PC-9 (cell line): ENCODE measurements at regions of chr4 and their contacts with region 1.

Region 1: GRCh38 chr4:109815151-109816081 is at the start of gene GAR1:
- DNase-seq: peak; percentile 80 to 91
- H3K4me3 ChIP-seq: peak within 1 kb of the TSS; percentile 90
- H3K27ac ChIP-seq: peak within 1 kb of the TSS; percentile 86
- H3K4me1 ChIP-seq: peaks cover 20% of the 10 kb centered on the region
- H3K27me3 ChIP-seq: no peaks in the 10 kb centered on the region
- CTCF ChIP-seq: no peak
- total RNA-seq, gene GAR1: 12.1 and 16.0 TPM in 2 replicates

Region 2: GRCh38 chr4:109729718-109730618 is 85.4 kb before region 1 on chr4 and contains the start of gene PLA2G12A:
- CTCF ChIA-PET with region 1: no interaction called
- POLR2A ChIA-PET with region 1: no interaction called
- intact Hi-C with region 1: loop called (anchors 1 kb)
- DNase-seq: peak; percentile 80 to 90
- H3K4me3 ChIP-seq: peak within 1 kb of the TSS; percentile 78
- H3K27ac ChIP-seq: peak within 1 kb of the TSS; percentile 74
- H3K4me1 ChIP-seq: peaks cover 9% of the 10 kb centered on the region
- H3K27me3 ChIP-seq: no peaks in the 10 kb centered on the region
- CTCF ChIP-seq: no peak
- total RNA-seq, gene PLA2G12A: 30.8 and 36.3 TPM in 2 replicates

Region 3: DNA sequence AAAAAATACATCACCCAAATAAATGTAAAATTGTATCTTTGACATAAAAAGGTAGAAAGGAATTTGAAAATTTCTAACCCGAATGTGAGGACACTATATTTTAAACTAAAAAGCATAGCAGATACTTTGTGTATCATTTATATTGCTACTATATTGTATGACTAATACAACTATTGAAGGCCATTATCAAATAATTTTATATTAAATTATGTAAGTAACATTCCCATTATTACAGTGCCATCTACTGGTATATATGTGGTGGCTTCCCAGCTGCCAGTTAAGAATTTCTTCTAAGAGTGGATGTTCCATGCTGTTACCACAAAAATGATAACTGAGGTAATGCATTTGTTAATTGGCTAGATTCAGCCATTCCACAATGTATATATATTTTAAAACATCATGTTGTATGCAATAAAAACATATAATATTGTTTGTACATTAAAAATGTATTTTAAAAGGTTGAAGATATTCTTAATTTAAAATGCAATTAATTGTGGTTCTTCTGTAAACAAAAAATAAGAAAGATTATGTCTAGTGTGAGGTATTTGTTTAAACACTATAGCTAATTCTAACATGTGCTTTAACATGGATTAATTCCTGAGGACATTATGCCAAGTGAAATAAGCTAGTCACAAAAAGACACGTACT is 162.6 kb after region 1 on chr4:
- CTCF ChIA-PET with region 1: no interaction called
- POLR2A ChIA-PET with region 1: no interaction called
- intact Hi-C with region 1: loop called (anchors 5 kb)
- DNase-seq: peak in 1 of 2 experiments; percentile 49
- H3K4me3 ChIP-seq: no peak overlapping the region
- H3K27ac ChIP-seq: no peak overlapping the region
- H3K4me1 ChIP-seq: no peaks in the 10 kb centered on the region
- H3K27me3 ChIP-seq: no peaks in the 10 kb centered on the region
- CTCF ChIP-seq: peak; percentile 75

Region 4: GRCh38 chr4:110335399-110335798 is 520.0 kb after region 1 on chr4:
- CTCF ChIA-PET with region 1: no interaction called
- POLR2A ChIA-PET with region 1: no interaction called
- intact Hi-C with region 1: no loop called
- DNase-seq: no peak
- H3K4me3 ChIP-seq: no peak overlapping the region
- H3K27ac ChIP-seq: no peak overlapping the region
- H3K4me1 ChIP-seq: no peaks in the 10 kb centered on the region
- H3K27me3 ChIP-seq: no peaks in the 10 kb centered on the region
- CTCF ChIP-seq: no peak